ENCODE measurements at regions of chr2 and their contacts with region 1.

Region 1: DNA sequence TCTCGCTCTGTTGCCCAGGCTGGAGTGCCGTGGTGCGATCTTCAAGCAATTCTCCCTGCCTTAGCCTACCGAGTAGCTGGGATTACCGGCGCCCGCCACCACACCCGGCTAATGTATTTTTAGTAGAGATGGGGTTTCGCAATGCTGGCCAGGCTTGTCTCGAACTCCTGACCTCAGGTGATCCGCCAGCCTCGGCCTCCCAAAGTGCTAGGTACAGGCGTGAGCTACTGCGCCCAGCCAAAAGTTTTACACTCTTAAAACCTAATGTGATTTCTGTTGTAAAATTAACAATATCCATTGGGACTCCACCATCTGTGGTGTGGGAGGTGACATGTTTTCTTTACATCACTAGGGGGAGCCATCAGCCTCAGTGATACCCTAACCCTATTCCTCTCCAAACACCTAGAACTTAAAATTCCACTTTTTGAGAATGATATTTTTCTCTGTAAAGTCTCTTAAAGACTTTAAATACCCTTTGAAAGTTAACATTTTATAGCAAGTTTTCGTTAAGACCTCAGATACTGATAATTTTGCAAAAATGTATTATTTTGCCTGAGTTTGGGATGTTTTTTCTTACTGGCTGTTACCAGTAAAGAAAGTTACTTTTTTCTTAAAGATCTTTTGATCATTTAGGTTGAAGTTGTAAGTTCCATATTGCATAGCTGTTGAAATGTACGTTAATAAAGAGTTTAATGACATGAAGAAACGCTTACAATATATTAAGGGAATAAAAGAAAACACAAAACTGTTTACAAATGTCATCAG is 11.6 kb upstream of the EIF2AK2 start:
- DNase-seq: peak; percentile 45
- ATAC-seq: peak; percentile 98
- H3K4me3 ChIP-seq: peak overlapping the region in 1 of 2 experiments; percentile 24; a peak in 2 of 4 replicates
- H3K27ac ChIP-seq: no peak overlapping the region
- H3K4me1 ChIP-seq: no peaks in the 10 kb centered on the region
- H3K27me3 ChIP-seq: no peaks in the 10 kb centered on the region
- CTCF ChIP-seq: peak; percentile 89

Region 2: DNA sequence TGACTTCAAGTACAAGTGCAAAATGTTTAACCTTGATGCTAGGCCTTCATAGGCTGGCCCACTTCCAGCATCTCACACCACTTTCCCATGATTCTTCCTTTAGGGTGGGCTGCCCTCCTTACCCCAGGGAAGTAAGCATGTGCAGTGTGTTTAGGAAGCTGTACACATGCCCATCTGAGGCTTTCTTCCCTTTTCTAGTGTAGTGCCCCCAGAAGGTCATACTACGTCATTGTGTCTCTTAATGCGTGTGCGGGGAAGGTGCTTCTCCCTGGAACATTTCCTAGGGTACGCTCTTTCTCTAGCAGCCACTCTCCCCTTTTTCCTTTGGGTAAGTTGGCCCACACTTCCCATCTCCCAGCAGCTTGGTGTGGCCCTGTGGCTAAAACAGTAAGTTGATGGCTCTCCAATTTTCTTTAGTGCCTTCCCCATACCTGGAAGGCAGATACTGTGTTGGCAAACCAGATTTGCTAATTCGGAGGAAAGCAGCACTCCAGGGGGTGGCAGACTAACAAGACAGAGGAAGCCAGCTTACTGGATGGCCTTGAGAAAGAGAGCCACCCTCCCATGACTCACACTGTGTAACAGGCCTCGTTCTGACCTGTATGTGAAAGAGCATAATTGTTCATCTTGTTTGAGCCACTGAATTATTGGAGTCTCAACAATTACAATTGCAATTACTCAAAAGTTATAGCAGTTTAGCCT is 21.2 kb after region 1 on chr2:
- CTCF ChIA-PET with region 1: no interaction called
- POLR2A ChIA-PET with region 1: interaction called, 10 read pairs
- in situ Hi-C with region 1: no loop called
- intact Hi-C with region 1: no loop called
- DNase-seq: peak; percentile 48
- ATAC-seq: peak; percentile 82
- H3K4me3 ChIP-seq: no peak overlapping the region
- H3K27ac ChIP-seq: no peak overlapping the region; the same call in 1 of the 2 replicates
- H3K4me1 ChIP-seq: 0 out of 2 replicates have a peak, but pooled peaks cover 4% of the 10 kb centered on the region
- H3K27me3 ChIP-seq: no peaks in the 10 kb centered on the region
- CTCF ChIP-seq: no peak

Region 3: GRCh38 chr2:37231241-37232130 is 63.1 kb after region 1 on chr2 and contains the starts of genes CEBPZ and NDUFAF7:
- CTCF ChIA-PET with region 1: no interaction called
- POLR2A ChIA-PET with region 1: interaction called, 3 read pairs
- in situ Hi-C with region 1: no loop called
- intact Hi-C with region 1: loop called (anchors 10 kb)
- DNase-seq: peak; percentile 71
- ATAC-seq: peak; percentile 99
- H3K4me3 ChIP-seq: peak within 1 kb of the TSS; percentile 64 to 90
- H3K27ac ChIP-seq: peak within 1 kb of the TSS; percentile 87
- H3K4me1 ChIP-seq: peaks cover 16% of the 10 kb centered on the region
- H3K27me3 ChIP-seq: no peaks in the 10 kb centered on the region
- CTCF ChIP-seq: no peak
- total RNA-seq, gene CEBPZ: 63.8 TPM
- total RNA-seq, gene NDUFAF7: 17.7 TPM

Region 4: DNA sequence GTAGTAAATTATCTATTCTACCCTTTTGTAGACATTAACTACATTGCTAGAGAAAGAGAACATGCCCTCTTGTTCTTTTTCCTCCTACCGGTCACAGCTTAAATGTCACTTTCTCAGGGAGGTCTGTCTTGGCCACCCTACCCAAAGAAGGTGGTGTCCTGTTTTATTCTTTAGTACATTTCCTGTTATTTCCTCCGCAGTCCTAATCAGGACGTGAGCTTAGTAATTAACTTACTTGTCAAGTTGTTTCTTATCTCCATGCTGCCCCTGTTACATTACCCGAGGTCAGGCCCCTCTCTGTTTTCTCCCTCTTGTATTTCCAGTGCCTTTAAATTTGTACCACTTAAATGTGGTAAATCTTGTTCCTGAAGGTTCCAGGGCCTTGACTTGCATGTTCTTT is 683.0 kb after region 1 on chr2:
- CTCF ChIA-PET with region 1: interaction called, 10 read pairs
- POLR2A ChIA-PET with region 1: no interaction called
- in situ Hi-C with region 1: no loop called
- intact Hi-C with region 1: no loop called
- DNase-seq: no peak
- ATAC-seq: no peak
- H3K4me3 ChIP-seq: no peak overlapping the region
- H3K27ac ChIP-seq: no peak overlapping the region
- H3K4me1 ChIP-seq: no peaks in the 10 kb centered on the region
- H3K27me3 ChIP-seq: peaks cover 7% of the 10 kb centered on the region
- CTCF ChIP-seq: no peak

Measured in Panc1 (cell line).